ENCODE measurements at regions of chr19 and their contacts with region 1.

Region 1: DNA sequence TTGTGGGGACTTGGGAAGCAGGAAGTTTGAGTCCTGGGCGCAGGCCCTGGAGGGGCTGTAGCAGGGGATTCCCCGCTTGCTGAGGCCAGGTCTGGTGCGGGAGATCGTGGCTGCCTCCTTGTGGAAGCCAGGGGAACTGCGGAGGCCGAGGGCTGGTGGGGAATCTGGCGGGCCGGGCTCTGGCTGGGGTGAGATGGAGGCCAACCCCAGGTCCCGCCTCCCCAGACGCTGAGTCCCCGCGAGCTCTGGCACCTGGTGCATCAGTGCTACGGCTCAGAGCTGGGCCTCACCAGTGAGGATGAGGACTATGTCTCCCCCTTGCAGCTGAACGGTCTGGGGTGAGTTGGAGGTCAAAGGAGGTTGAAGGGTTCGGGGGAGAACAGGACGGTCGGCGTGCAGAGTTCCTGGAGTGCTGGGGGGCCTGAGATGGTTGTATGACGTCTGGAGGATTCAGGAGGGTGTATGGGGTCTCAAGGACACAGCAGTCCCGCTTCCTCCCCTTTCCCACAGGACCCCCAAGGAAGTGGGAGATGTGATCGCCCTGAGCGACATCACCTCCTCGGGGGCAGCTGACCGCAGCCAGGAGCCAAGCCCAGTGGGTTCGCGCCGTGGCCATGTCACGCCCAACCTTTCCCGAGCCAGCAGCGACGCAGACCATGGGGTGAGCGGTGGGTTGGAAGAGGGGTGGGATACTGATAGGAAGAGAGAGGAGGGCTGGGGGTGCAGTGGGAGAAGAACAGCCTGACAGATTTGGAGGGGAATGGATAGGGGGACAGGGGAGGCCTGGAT is 13.1 kb downstream of the GRAMD1A start:
- DNase-seq: peak; percentile 74 to 87 (median 80)
- H3K4me3 ChIP-seq: peak overlapping the region; percentile 37
- H3K4me3 Mint-ChIP-seq: peak overlapping the region; percentile 7 to 84 (median 81)
- H3K27ac ChIP-seq: peak overlapping the region; percentile 5
- H3K27ac Mint-ChIP-seq: peak overlapping the region; percentile 90 to 99 (median 97)
- H3K4me1 ChIP-seq: peaks cover 63% of the 10 kb centered on the region
- H3K4me1 Mint-ChIP-seq: peaks cover 60 to 79% (median 70%) of the 10 kb centered on the region in 3 donors
- H3K27me3 ChIP-seq: no peaks in the 10 kb centered on the region
- H3K27me3 Mint-ChIP-seq: peaks cover 0 to 1% of the 10 kb centered on the region in 2 donors

Region 2: DNA sequence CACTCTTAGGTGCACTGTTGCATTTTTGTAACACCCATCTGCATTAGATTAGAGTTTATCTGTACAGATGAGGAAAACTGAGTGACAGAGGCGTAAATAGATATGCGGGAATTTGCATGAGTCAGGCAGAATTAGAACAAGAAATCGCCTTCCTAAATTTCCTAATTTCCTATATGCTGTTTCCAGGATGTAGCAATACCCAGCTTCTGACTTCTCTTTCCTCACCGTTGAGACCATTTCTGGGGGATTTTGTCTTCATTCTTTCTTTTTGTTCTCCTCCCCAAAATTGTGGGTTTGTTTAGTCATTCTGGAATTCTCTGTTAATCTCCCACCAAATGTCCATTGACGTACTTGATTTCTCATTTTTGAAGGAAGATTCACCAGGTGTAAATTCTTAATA is 38.6 kb before region 1 on chr19:
- CTCF ChIA-PET with region 1: interaction called, 122 read pairs
- POLR2A ChIA-PET with region 1: interaction called, 6 read pairs
- DNase-seq: no peak
- H3K4me3 ChIP-seq: no peak overlapping the region
- H3K4me3 Mint-ChIP-seq: no peak overlapping the region
- H3K27ac ChIP-seq: no peak overlapping the region
- H3K27ac Mint-ChIP-seq: peak overlapping the region in 2 of 8 donors; percentile 34 to 80
- H3K4me1 ChIP-seq: peaks cover 20% of the 10 kb centered on the region
- H3K4me1 Mint-ChIP-seq: peaks cover 19 to 34% (median 27%) of the 10 kb centered on the region in 3 donors
- H3K27me3 ChIP-seq: no peaks in the 10 kb centered on the region
- H3K27me3 Mint-ChIP-seq: peaks cover 0 to 4% of the 10 kb centered on the region in 2 donors

Region 3: GRCh38 chr19:34999498-35000341 is 13.5 kb before region 1 on chr19 and contains the start of gene GRAMD1A:
- CTCF ChIA-PET with region 1: interaction called, 98 read pairs
- POLR2A ChIA-PET with region 1: interaction called, 48 read pairs
- DNase-seq: peak; percentile 52 to 76 (median 67)
- H3K4me3 ChIP-seq: peak within 1 kb of the TSS; percentile 81
- H3K4me3 Mint-ChIP-seq: peak within 1 kb of the TSS; percentile 91 to 100 (median 97)
- H3K27ac ChIP-seq: peak within 1 kb of the TSS; percentile 90
- H3K27ac Mint-ChIP-seq: peak within 1 kb of the TSS; percentile 95 to 100 (median 98)
- H3K4me1 ChIP-seq: peaks cover 87% of the 10 kb centered on the region
- H3K4me1 Mint-ChIP-seq: peaks cover 61 to 82% (median 67%) of the 10 kb centered on the region in 3 donors
- H3K27me3 ChIP-seq: no peaks in the 10 kb centered on the region
- H3K27me3 Mint-ChIP-seq: no peaks in the 10 kb centered on the region
- total RNA-seq, gene GRAMD1A: 205 to 218 TPM

Region 4: GRCh38 chr19:35044317-35045117 is 31.3 kb after region 1 on chr19:
- CTCF ChIA-PET with region 1: interaction called, 10 read pairs
- POLR2A ChIA-PET with region 1: no interaction called
- DNase-seq: peak; percentile 33 to 70 (median 53)
- H3K4me3 ChIP-seq: no peak overlapping the region
- H3K4me3 Mint-ChIP-seq: no peak overlapping the region
- H3K27ac ChIP-seq: no peak overlapping the region
- H3K27ac Mint-ChIP-seq: peak overlapping the region in 4 of 8 donors; percentile 45 to 91 (median 47)
- H3K4me1 ChIP-seq: peaks cover 31% of the 10 kb centered on the region
- H3K4me1 Mint-ChIP-seq: peaks cover 21 to 37% (median 31%) of the 10 kb centered on the region in 3 donors
- H3K27me3 ChIP-seq: no peaks in the 10 kb centered on the region
- H3K27me3 Mint-ChIP-seq: peaks cover 2 to 5% of the 10 kb centered on the region in 2 donors

Measured in CD8-positive, alpha-beta memory T cell (primary cell).